ENCODE measurements at regions of chr12 and their contacts with region 1.

Region 1: DNA sequence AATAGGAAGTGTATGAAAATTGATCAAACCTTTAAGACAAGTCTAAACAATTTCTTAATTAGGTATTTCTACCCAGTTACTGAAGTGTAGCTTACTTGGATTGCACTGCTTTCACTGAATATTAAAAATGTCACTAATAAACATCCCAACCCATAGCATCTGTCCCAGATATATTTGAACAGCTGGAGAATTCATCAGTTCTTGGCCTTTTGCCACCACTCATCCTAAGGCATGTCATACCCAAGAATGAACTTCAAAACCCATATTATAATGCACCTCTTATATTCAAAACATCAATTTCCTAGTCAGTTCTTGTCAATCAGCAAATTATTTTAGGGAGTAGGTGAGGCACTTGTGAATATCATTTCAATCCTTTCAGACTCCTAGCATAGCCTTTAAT is 392.3 kb downstream of the PAWR start:
- DNase-seq: no peak
- ATAC-seq: no peak
- H3K4me3 ChIP-seq: no peak overlapping the region
- H3K27ac ChIP-seq: no peak overlapping the region
- H3K4me1 ChIP-seq: peaks cover 0 to 6% (median 0%) of the 10 kb centered on the region in 12 donors
- H3K27me3 ChIP-seq: no peaks in the 10 kb centered on the region
- CTCF ChIP-seq: no peak
- POLR2A ChIP-seq: no peak

Region 2: GRCh38 chr12:79233341-79233781 is 65.1 kb before region 1 on chr12:
- intact Hi-C with region 1: loop called in 1 of 10 experiments (anchors 10 kb)
- DNase-seq: no peak
- ATAC-seq: no peak
- H3K4me3 ChIP-seq: no peak overlapping the region
- H3K27ac ChIP-seq: no peak overlapping the region
- H3K4me1 ChIP-seq: no peaks in the 10 kb centered on the region
- H3K27me3 ChIP-seq: no peaks in the 10 kb centered on the region
- CTCF ChIP-seq: no peak
- POLR2A ChIP-seq: no peak